Activated CD8-positive, alpha-beta T cell treated with anti-CD3 and anti-CD28 coated beads for 36 hours (primary cell): ENCODE measurements at regions of chr14 and their contacts with region 1.

Region 1: DNA sequence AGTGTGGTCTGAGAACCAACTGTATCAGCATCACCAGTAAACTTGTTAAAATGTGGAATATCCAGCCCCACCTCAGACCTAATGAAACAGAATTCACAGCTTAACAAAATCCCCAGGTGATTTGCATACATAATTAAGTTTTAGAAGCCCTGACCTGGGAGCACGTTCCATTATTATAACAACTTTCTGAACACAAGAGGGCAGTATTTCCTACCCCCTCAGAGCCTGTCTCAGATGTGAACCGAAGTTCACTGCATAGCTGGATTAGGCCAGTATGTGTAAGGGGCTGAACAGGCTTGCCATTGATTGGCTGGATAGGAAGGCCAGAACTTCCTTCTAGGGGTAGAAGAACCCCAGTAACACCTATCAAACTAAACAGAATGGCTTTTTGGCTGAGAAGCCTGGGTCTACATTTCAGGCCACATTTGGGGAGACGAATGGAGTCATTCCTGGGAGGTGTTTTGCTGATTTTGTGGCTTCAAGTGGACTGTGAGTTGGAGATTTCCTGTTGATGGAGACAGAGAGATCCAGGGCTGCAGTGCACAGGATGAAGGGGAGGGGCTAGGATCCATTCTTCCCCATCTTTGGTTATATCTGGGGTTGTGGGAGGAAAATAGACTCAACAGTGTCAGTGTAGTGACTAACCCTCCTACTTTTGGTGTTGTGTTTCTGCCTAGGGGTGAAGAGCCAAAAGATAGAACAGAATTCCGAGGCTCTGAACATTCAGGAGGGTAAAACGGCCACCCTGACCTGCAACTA is 94.7 kb upstream of the OR4E1 start:
- DNase-seq: peak; percentile 39
- ATAC-seq: peak; percentile 91
- H3K4me3 Mint-ChIP-seq: peak overlapping the region; percentile 48
- H3K27ac Mint-ChIP-seq: peak overlapping the region; percentile 54
- H3K4me1 Mint-ChIP-seq: no peaks in the 10 kb centered on the region
- H3K27me3 Mint-ChIP-seq: peaks cover 12% of the 10 kb centered on the region
- CTCF ChIP-seq: peak; percentile 67

Region 2: GRCh38 chr14:21780429-21781084 is 12.3 kb after region 1 on chr14:
- CTCF ChIA-PET with region 1: interaction called, 11 read pairs
- POLR2A ChIA-PET with region 1: no interaction called
- intact Hi-C with region 1: no loop called
- DNase-seq: no peak
- ATAC-seq: no peak
- H3K4me3 Mint-ChIP-seq: no peak overlapping the region
- H3K27ac Mint-ChIP-seq: no peak overlapping the region
- H3K4me1 Mint-ChIP-seq: no peaks in the 10 kb centered on the region
- H3K27me3 Mint-ChIP-seq: peaks cover 11% of the 10 kb centered on the region
- CTCF ChIP-seq: no peak